ENCODE measurements at regions of chr4 and their contacts with region 1.

Region 1: GRCh38 chr4:185183619-185184281 is 20.1 kb downstream of the CFAP97 start:
- DNase-seq: peak; percentile 53
- H3K4me3 Mint-ChIP-seq: no peak overlapping the region
- H3K27ac Mint-ChIP-seq: no peak overlapping the region
- H3K4me1 Mint-ChIP-seq: peaks cover 24% of the 10 kb centered on the region
- H3K27me3 Mint-ChIP-seq: no peaks in the 10 kb centered on the region

Region 2: GRCh38 chr4:185005216-185005819 is 178.4 kb before region 1 on chr4:
- intact Hi-C with region 1: loop called (anchors 1 kb)
- DNase-seq: peak; percentile 69
- H3K4me3 Mint-ChIP-seq: peak overlapping the region; percentile 46
- H3K27ac Mint-ChIP-seq: no peak overlapping the region
- H3K4me1 Mint-ChIP-seq: peaks cover 9% of the 10 kb centered on the region
- H3K27me3 Mint-ChIP-seq: peaks cover 42% of the 10 kb centered on the region

Region 3: DNA sequence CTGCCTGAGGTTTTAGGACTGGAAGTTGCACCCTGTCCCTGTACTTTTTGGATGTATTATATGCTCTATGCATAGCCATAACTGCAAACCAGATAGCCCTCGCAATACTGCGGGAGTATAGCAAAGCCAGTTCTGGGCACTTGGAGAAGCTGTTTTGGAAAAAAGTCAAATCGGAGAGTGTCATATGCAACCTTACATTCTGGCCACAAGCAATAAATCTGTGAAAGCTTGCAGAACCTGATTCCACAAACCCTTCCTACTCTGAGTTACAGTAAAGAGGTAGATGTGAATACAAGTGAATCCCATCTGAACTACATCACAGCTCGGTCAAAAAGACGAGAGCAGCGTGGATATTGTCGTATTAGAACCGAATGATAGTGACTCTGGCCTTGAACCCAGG is 155.1 kb before region 1 on chr4:
- intact Hi-C with region 1: no loop called
- DNase-seq: no peak
- H3K4me3 Mint-ChIP-seq: no peak overlapping the region
- H3K27ac Mint-ChIP-seq: no peak overlapping the region
- H3K4me1 Mint-ChIP-seq: no peaks in the 10 kb centered on the region
- H3K27me3 Mint-ChIP-seq: peaks cover 57% of the 10 kb centered on the region

Region 4: DNA sequence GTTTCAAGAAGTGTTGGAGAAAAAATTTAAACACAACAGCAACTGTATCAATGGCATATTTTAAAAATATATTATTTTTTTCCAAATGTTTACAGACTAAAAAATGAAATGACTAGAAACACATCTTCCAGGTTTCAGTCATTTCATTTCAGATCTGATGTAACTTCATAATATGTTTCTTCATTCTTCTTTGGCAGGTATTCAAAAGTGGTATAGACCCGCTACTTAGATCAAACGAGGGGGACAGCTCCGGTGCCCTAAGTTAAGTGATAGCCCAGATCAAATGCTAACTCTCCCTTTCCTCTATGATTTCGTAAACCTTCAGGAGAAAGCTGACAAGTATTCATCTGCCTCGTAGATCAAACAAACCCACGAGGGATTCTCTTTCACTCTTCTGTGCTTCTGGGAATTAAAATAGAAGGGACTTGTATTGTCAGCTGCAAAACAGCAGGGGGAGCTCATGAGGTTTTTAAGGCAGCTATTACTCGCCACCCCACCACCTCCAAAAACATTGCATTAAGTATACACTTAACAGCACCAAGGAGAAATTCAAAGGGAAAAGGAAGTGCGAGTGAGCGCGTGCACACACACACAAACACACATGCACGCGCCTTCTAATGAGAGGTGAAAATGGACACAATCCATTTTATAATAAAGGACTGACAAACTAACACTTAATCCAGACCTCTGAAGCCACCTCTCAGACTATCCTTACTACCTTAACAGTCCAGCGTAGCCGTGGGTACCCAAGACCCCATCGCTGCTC is 144.1 kb before region 1 on chr4:
- intact Hi-C with region 1: loop called (anchors 1 kb)
- DNase-seq: peak; percentile 28
- H3K4me3 Mint-ChIP-seq: no peak overlapping the region
- H3K27ac Mint-ChIP-seq: no peak overlapping the region
- H3K4me1 Mint-ChIP-seq: peaks cover 7% of the 10 kb centered on the region
- H3K27me3 Mint-ChIP-seq: peaks cover 27% of the 10 kb centered on the region

Region 5: GRCh38 chr4:185142912-185143595 is 40.7 kb before region 1 on chr4 and contains the start of gene SLC25A4:
- intact Hi-C with region 1: loop called (anchors 2 kb)
- DNase-seq: peak; percentile 56
- H3K4me3 Mint-ChIP-seq: peak within 1 kb of the TSS; percentile 82
- H3K27ac Mint-ChIP-seq: no peak within 1 kb of the TSS
- H3K4me1 Mint-ChIP-seq: peaks cover 12% of the 10 kb centered on the region
- H3K27me3 Mint-ChIP-seq: peaks cover 71% of the 10 kb centered on the region
- total RNA-seq, gene SLC25A4: 2.3 and 2.7 TPM in 2 replicates

Region 6: DNA sequence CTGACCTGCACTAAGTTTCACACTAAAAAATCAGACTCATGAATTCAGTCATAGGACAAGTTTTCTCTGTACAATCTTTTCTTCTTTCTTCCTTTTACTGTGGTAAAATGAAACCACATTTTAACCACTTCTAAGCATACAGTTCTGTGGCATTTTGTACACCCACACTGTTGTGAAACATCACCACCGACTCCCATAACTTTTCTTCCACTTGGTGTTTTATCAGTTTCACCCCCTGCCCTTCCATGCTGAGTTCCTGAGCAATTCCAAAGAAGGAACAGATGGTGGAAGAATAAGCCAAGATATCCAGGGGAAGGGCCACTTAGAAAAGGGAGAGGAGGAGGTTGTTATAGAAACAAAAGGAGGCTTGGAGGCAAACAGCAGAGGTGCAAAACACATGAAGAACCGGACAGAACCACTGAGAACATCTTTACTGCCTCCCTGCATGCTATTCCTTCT is 18.1 kb before region 1 on chr4:
- intact Hi-C with region 1: loop called (anchors 1 kb)
- DNase-seq: no peak
- H3K4me3 Mint-ChIP-seq: no peak overlapping the region
- H3K27ac Mint-ChIP-seq: peak overlapping the region; percentile 80
- H3K4me1 Mint-ChIP-seq: peaks cover 20% of the 10 kb centered on the region
- H3K27me3 Mint-ChIP-seq: peaks cover 32% of the 10 kb centered on the region

Region 7: GRCh38 chr4:185488650-185489049 is 304.9 kb after region 1 on chr4:
- intact Hi-C with region 1: no loop called
- DNase-seq: no peak
- H3K4me3 Mint-ChIP-seq: no peak overlapping the region
- H3K27ac Mint-ChIP-seq: no peak overlapping the region
- H3K4me1 Mint-ChIP-seq: no peaks in the 10 kb centered on the region
- H3K27me3 Mint-ChIP-seq: peaks cover 10% of the 10 kb centered on the region